Heart left ventricle (tissue), 16 donors: ENCODE measurements at regions of chr2 and their contacts with region 1.

Region 1: DNA sequence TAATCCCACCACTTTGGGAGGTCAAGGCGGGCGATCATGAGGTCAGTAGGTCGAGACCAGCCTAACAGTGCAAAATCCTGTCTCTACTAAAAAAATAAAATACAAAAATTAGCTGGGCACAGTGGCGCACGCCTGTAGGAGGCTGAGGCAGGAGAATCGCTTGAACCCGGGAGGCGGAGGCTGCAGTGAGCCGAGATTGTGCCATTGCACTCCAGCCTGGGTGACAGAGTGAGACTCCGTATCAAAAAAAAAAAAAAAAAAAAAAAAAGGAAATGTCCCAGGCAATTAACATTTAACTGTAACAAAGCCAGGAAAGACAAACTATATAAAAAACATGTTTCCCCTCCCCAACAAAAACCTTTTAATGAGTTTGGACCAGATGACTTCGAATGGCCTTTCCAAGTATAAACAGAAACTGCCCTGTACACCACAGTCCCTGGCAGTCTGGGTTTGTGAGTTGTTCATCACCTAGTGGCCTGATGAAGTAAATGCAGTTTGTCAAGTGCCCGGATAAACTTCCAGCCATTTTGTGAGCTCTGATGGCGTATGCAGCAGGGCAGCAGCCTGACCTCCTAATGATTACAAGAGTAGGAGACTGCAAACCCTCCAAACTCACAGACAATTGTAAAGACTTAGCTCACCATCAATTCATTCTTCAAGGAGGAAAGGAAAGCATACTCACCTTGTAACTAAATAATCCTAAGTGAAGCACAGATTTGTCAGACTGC is 16.6 kb upstream of the PCBP1 start:
- DNase-seq: peak in 4 of 5 donors; percentile 60 to 81 (median 72)
- ATAC-seq: peak; percentile 93 to 98 (median 97)
- H3K4me3 ChIP-seq: peak overlapping the region in 5 of 12 donors; percentile 1 to 36 (median 15)
- H3K27ac ChIP-seq: peak overlapping the region; percentile 35 to 83 (median 75)
- H3K4me1 ChIP-seq: peaks cover 0 to 39% (median 14%) of the 10 kb centered on the region in 12 donors
- H3K27me3 ChIP-seq: no peaks in the 10 kb centered on the region
- CTCF ChIP-seq: peak; percentile 65 to 90 (median 83)
- POLR2A ChIP-seq: no peak

Region 2: DNA sequence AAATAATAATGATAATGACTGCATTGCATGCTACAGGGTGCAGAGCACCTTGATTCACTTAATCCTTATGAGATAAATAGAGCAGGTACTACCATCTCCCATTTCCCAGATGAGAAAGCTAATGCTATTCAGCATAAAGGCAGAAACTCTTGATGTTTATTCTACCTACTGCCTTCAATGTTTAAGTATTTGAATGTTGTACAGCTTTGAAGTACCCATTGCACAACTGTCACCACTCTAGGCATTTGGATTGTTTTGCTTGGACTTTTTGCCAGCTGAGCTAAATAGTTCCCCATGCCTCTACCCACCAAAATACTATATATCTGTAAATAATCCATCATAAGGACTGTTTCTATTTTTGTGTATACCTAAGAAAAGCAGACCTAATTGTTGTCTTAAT is 163.5 kb before region 1 on chr2:
- intact Hi-C with region 1: loop called in 4 of 10 experiments (anchors 2 to 5 kb)
- DNase-seq: no peak
- ATAC-seq: no peak
- H3K4me3 ChIP-seq: no peak overlapping the region
- H3K27ac ChIP-seq: no peak overlapping the region
- H3K4me1 ChIP-seq: peaks cover 0 to 6% (median 0%) of the 10 kb centered on the region in 12 donors
- H3K27me3 ChIP-seq: no peaks in the 10 kb centered on the region
- CTCF ChIP-seq: no peak
- POLR2A ChIP-seq: no peak

Region 3: GRCh38 chr2:70009762-70010575 is 60.7 kb before region 1 on chr2:
- intact Hi-C with region 1: loop called in 2 of 10 experiments (anchors 10 kb)
- DNase-seq: no peak
- ATAC-seq: peak in 3 of 4 donors; percentile 34 to 54 (median 52)
- H3K4me3 ChIP-seq: no peak overlapping the region
- H3K27ac ChIP-seq: peak overlapping the region in 1 of 12 donors; percentile 2
- H3K4me1 ChIP-seq: peaks cover 0 to 12% (median 0%) of the 10 kb centered on the region in 12 donors
- H3K27me3 ChIP-seq: no peaks in the 10 kb centered on the region
- CTCF ChIP-seq: no peak
- POLR2A ChIP-seq: no peak

Region 4: GRCh38 chr2:70142590-70143313 is 72.0 kb after region 1 on chr2:
- intact Hi-C with region 1: loop called in 2 of 10 experiments (anchors 1 to 2 kb)
- DNase-seq: peak; percentile 99 to 100 (median 99)
- ATAC-seq: peak; percentile 90 to 91 (median 90)
- H3K4me3 ChIP-seq: peak overlapping the region in 11 of 12 donors; percentile 26 to 92 (median 73)
- H3K27ac ChIP-seq: peak overlapping the region; percentile 94 to 100 (median 98)
- H3K4me1 ChIP-seq: peaks cover 2 to 35% (median 20%) of the 10 kb centered on the region in 12 donors
- H3K27me3 ChIP-seq: no peaks in the 10 kb centered on the region
- CTCF ChIP-seq: peak; percentile 91 to 99 (median 97)
- POLR2A ChIP-seq: peak in 1 of 2 donors; percentile 47